PC-9 (cell line): ENCODE measurements at regions of chr6 and their contacts with region 1.

Region 1: DNA sequence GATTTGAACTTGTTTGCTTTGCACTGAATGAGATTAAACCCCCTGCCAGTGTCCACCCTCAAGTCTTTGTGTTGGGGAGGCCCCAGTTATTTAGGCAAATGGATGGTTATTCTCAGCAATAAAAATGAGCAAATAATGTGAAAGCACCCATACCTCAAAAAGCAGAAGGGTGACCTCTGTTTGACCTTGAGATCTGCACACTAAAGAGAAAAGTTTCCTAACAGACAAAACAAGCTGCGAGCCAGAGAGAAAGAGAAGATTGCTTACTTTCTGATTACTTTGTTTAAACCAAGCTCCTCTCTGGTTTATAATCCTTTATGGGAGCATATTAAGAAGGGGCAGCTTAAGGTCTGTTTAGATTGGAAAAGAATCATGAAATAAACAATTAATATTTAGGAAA is 30.4 kb upstream of the TRERF1 start:
- DNase-seq: no peak
- H3K4me3 ChIP-seq: no peak overlapping the region
- H3K27ac ChIP-seq: no peak overlapping the region
- H3K4me1 ChIP-seq: no peaks in the 10 kb centered on the region
- H3K27me3 ChIP-seq: no peaks in the 10 kb centered on the region
- CTCF ChIP-seq: no peak

Region 2: DNA sequence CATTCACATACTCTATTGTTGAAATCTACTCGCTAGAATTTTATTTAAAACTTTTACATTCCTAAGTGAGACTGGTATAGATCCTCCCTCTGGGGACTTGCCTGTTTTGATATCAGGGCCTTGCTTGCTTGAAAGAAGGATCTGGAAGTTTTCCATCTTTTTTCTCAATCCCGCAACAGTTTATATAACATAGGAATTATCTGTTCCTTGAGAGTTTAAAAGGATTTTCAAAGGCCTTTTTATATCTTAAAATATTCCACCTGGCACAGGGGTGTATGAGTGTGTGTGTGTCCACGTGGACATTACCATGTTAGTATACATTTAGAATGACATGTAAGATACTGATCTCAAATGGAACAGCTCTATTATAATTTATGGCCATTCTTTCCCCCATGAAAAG is 126.8 kb before region 1 on chr6:
- CTCF ChIA-PET with region 1: no interaction called
- POLR2A ChIA-PET with region 1: interaction called, 11 read pairs
- intact Hi-C with region 1: no loop called
- DNase-seq: no peak
- H3K4me3 ChIP-seq: no peak overlapping the region
- H3K27ac ChIP-seq: no peak overlapping the region
- H3K4me1 ChIP-seq: 0 out of 2 replicates have a peak, but pooled peaks cover 4% of the 10 kb centered on the region
- H3K27me3 ChIP-seq: no peaks in the 10 kb centered on the region
- CTCF ChIP-seq: no peak

Region 3: GRCh38 chr6:42404484-42404883 is 77.7 kb before region 1 on chr6:
- CTCF ChIA-PET with region 1: no interaction called
- POLR2A ChIA-PET with region 1: no interaction called
- intact Hi-C with region 1: no loop called
- DNase-seq: peak; percentile 78 to 94
- H3K4me3 ChIP-seq: peak overlapping the region; percentile 30; the same call in 1 of the 2 replicates
- H3K27ac ChIP-seq: peak overlapping the region; percentile 86
- H3K4me1 ChIP-seq: peaks cover 58% of the 10 kb centered on the region
- H3K27me3 ChIP-seq: no peaks in the 10 kb centered on the region
- CTCF ChIP-seq: no peak

Region 4: DNA sequence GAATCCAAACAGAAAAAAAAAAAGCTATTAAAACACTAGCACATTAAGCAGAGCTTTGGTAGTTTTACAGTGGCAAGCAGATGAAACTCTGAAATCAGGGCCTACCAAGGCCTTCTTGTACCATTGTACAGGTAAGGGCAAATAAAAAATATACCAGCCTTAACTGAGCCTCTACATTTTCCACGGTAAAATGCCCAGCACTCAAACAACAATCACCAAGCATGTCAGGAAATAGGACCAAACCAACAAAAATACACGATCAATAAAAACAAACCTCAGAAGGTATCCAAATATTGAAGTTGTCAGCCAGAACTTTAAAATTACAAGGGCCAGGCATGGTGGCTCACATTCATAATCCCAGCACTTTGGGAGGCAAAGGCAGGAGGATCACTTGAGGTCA is 48.8 kb before region 1 on chr6:
- CTCF ChIA-PET with region 1: interaction called, 11 read pairs
- POLR2A ChIA-PET with region 1: no interaction called
- intact Hi-C with region 1: no loop called
- DNase-seq: no peak
- H3K4me3 ChIP-seq: no peak overlapping the region
- H3K27ac ChIP-seq: no peak overlapping the region
- H3K4me1 ChIP-seq: no peaks in the 10 kb centered on the region
- H3K27me3 ChIP-seq: no peaks in the 10 kb centered on the region
- CTCF ChIP-seq: no peak